Naive thymus-derived CD4-positive, alpha-beta T cell (primary cell): ENCODE measurements at regions of chr1 and their contacts with region 1.

Region 1: DNA sequence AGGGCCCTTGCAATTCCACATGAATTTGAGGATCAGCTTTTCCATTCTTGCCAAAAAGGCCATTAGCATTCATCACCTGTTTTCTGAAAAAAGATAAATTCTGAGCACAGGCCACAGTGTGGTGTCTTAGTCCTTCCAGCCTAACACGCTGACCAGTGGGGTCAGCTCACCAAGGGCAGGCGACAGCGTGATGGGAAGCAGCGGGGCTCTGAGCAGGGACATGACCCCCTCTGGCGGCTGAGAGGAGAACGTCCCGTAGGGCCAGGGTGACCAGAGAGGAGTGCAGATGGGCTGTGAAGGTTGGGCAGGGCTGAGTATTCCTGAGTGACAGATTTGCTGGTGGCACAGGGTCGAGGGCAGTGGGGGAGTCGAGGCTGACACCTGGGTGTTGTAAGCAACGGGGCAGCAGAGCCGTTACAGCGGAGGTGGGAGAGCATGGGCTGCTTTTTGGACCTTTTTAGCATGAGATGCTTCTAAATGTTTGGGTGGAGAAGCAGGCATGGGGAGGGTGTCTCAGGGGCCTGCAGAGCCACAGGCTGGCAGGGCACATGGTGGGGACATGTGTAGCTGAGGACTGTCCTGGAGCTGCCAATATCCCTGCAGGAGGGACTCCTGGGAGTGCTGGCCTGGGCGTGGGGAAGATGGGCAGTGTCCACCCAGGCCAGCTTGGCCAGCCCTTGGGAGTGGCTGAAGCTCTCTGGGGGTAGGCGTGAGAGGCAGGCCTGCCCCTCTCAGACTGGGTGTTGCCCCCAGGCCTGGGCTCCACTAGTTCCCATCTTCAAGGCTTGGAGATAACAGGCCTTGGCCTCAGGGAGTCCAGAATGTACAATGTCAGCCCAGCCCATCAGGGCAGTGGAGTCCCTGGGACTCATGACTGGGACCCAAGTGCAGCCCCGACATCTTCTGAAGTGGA is 8.6 kb upstream of the CALML6 start:
- DNase-seq: peak in 8 of 9 donors; percentile 49 to 77 (median 54)
- ATAC-seq: peak; percentile 40
- H3K4me3 ChIP-seq: no peak overlapping the region
- H3K4me3 Mint-ChIP-seq: peak overlapping the region; percentile 5 to 81 (median 58)
- H3K27ac ChIP-seq: no peak overlapping the region
- H3K27ac Mint-ChIP-seq: peak overlapping the region in 7 of 9 donors; percentile 2 to 72 (median 44)
- H3K4me1 ChIP-seq: peaks cover 5 to 10% of the 10 kb centered on the region in 2 donors
- H3K4me1 Mint-ChIP-seq: peaks cover 12 to 18% (median 15%) of the 10 kb centered on the region in 7 donors
- H3K27me3 ChIP-seq: no peaks in the 10 kb centered on the region
- H3K27me3 Mint-ChIP-seq: no peaks in the 10 kb centered on the region

Region 2: GRCh38 chr1:1307908-1308755 is 598.3 kb before region 1 on chr1 and contains the starts of genes ACAP3 and PUSL1:
- CTCF ChIA-PET with region 1: no interaction called
- POLR2A ChIA-PET with region 1: no interaction called
- intact Hi-C with region 1: loop called in 1 of 2 experiments (anchors 2 kb)
- DNase-seq: peak; percentile 88 to 94 (median 91)
- ATAC-seq: peak; percentile 87
- H3K4me3 ChIP-seq: peak within 1 kb of the TSS; percentile 83
- H3K4me3 Mint-ChIP-seq: peak within 1 kb of the TSS; percentile 82 to 94 (median 88)
- H3K27ac ChIP-seq: peak within 1 kb of the TSS; percentile 90
- H3K27ac Mint-ChIP-seq: peak within 1 kb of the TSS; percentile 47 to 94 (median 89)
- H3K4me1 ChIP-seq: peaks cover 31 to 34% of the 10 kb centered on the region in 2 donors
- H3K4me1 Mint-ChIP-seq: peaks cover 11 to 24% (median 17%) of the 10 kb centered on the region in 7 donors
- H3K27me3 ChIP-seq: no peaks in the 10 kb centered on the region
- H3K27me3 Mint-ChIP-seq: no peaks in the 10 kb centered on the region
- total RNA-seq, gene ACAP3: 51.5 to 70.8 (median 58.2) TPM
- total RNA-seq, gene PUSL1: 17.7 to 25.4 (median 19.4) TPM

Region 3: DNA sequence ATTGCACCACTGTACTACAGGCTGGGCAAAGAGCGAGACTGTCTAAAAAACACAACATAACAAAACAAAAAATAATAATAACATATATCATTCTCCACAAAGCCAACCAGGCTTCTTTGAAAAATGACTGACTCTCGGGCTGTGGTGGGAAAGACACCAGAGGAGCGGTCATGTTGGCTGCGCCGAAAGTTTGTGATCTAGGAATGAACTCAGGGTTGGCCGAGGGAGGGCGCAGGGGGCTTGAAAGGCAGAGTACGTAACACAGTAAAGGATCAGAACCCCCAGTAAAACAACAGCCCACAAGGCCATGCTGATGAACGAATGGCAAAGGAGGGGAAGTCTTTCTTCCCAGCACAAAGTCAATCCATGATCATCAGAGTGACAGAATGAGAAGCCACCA is 218.6 kb before region 1 on chr1:
- CTCF ChIA-PET with region 1: no interaction called
- POLR2A ChIA-PET with region 1: no interaction called
- intact Hi-C with region 1: loop called in 1 of 2 experiments (anchors 5 kb)
- DNase-seq: no peak
- ATAC-seq: no peak
- H3K4me3 ChIP-seq: no peak overlapping the region
- H3K4me3 Mint-ChIP-seq: peak overlapping the region in 5 of 10 donors; percentile 11 to 77 (median 39)
- H3K27ac ChIP-seq: peak overlapping the region; percentile 20
- H3K27ac Mint-ChIP-seq: peak overlapping the region in 4 of 9 donors; percentile 3 to 84 (median 62)
- H3K4me1 ChIP-seq: no peaks in the 10 kb centered on the region
- H3K4me1 Mint-ChIP-seq: peaks cover 2 to 64% (median 37%) of the 10 kb centered on the region in 7 donors
- H3K27me3 ChIP-seq: no peaks in the 10 kb centered on the region
- H3K27me3 Mint-ChIP-seq: no peaks in the 10 kb centered on the region

Region 4: DNA sequence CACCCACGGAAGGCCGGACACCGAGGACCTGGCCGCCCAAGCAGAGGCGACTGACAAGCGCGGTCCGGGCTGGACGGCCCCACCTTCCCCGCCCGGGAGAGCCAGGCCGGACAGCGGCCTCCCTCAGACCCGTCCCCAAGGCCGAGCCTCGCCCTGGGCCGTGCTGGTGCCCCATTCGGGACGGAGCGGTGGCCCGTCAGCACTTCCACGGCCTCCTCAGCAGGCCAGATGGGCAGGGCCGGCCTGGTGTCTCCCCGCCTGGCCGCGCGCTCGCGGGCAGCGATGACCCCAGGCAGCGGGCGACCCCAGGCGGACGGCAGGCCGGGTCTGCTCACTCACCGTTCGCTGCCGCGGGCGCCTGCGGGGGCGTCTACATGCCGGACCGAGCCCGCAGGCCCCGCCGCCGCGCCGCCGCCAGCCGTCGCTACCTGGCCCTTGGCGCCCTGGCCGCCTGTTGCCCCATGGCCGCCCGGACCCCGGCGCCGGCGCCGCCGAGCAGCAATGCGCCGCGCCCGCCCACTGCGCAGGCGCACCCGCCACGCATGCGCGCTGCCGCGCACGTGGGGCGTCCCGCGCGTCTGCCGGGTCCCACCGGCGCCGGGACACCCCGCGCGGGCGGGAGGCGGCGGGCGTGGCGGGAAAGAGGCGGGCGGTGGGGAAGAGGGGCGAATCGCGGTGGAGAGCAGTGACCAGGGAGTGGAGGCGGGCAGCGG is 128.3 kb before region 1 on chr1 and contains the start of gene NADK:
- CTCF ChIA-PET with region 1: interaction called, 8 read pairs
- POLR2A ChIA-PET with region 1: interaction called, 10 read pairs
- intact Hi-C with region 1: loop called (anchors 1 to 5 kb)
- DNase-seq: peak; percentile 59 to 92 (median 79)
- ATAC-seq: peak; percentile 62
- H3K4me3 ChIP-seq: peak within 1 kb of the TSS; percentile 74
- H3K4me3 Mint-ChIP-seq: peak within 1 kb of the TSS; percentile 84 to 95 (median 90)
- H3K27ac ChIP-seq: peak within 1 kb of the TSS; percentile 81
- H3K27ac Mint-ChIP-seq: peak within 1 kb of the TSS; percentile 94 to 97 (median 95)
- H3K4me1 ChIP-seq: peaks cover 47 to 61% of the 10 kb centered on the region in 2 donors
- H3K4me1 Mint-ChIP-seq: peaks cover 51 to 65% (median 59%) of the 10 kb centered on the region in 7 donors
- H3K27me3 ChIP-seq: no peaks in the 10 kb centered on the region
- H3K27me3 Mint-ChIP-seq: no peaks in the 10 kb centered on the region
- total RNA-seq, gene NADK: 45.2 to 115 (median 50.3) TPM

Region 5: GRCh38 chr1:1833916-1834325 is 72.5 kb before region 1 on chr1:
- CTCF ChIA-PET with region 1: no interaction called
- POLR2A ChIA-PET with region 1: no interaction called
- intact Hi-C with region 1: no loop called
- DNase-seq: no peak
- ATAC-seq: no peak
- H3K4me3 ChIP-seq: no peak overlapping the region
- H3K4me3 Mint-ChIP-seq: no peak overlapping the region
- H3K27ac ChIP-seq: no peak overlapping the region
- H3K27ac Mint-ChIP-seq: peak overlapping the region in 6 of 9 donors; percentile 35 to 78 (median 51)
- H3K4me1 ChIP-seq: no peaks in the 10 kb centered on the region
- H3K4me1 Mint-ChIP-seq: peaks cover 14 to 40% (median 32%) of the 10 kb centered on the region in 7 donors
- H3K27me3 ChIP-seq: no peaks in the 10 kb centered on the region
- H3K27me3 Mint-ChIP-seq: no peaks in the 10 kb centered on the region

Region 6: GRCh38 chr1:1890506-1891348 is 15.7 kb before region 1 on chr1 and contains the start of gene GNB1:
- CTCF ChIA-PET with region 1: interaction called, 5 read pairs
- POLR2A ChIA-PET with region 1: interaction called, 12 read pairs
- intact Hi-C with region 1: loop called (anchors 1 kb)
- DNase-seq: peak; percentile 80 to 96 (median 93)
- ATAC-seq: peak; percentile 88
- H3K4me3 ChIP-seq: peak within 1 kb of the TSS; percentile 64
- H3K4me3 Mint-ChIP-seq: peak within 1 kb of the TSS; percentile 83 to 100 (median 90)
- H3K27ac ChIP-seq: peak within 1 kb of the TSS; percentile 96
- H3K27ac Mint-ChIP-seq: peak within 1 kb of the TSS; percentile 89 to 98 (median 95)
- H3K4me1 ChIP-seq: peaks cover 36 to 52% of the 10 kb centered on the region in 2 donors
- H3K4me1 Mint-ChIP-seq: peaks cover 41 to 76% (median 61%) of the 10 kb centered on the region in 7 donors
- H3K27me3 ChIP-seq: no peaks in the 10 kb centered on the region
- H3K27me3 Mint-ChIP-seq: peaks cover 0 to under 1% (median 0%) of the 10 kb centered on the region in 5 donors
- total RNA-seq, gene GNB1: 170 to 358 (median 246) TPM

Region 7: GRCh38 chr1:1943834-1944570 is 37.6 kb after region 1 on chr1:
- CTCF ChIA-PET with region 1: no interaction called
- POLR2A ChIA-PET with region 1: no interaction called
- intact Hi-C with region 1: no loop called
- DNase-seq: peak in 8 of 9 donors; percentile 42 to 65 (median 49)
- ATAC-seq: peak; percentile 91
- H3K4me3 ChIP-seq: no peak overlapping the region
- H3K4me3 Mint-ChIP-seq: peak overlapping the region in 4 of 10 donors; percentile 6 to 65 (median 38)
- H3K27ac ChIP-seq: no peak overlapping the region
- H3K27ac Mint-ChIP-seq: no peak overlapping the region
- H3K4me1 ChIP-seq: peaks cover 3 to 6% of the 10 kb centered on the region in 2 donors
- H3K4me1 Mint-ChIP-seq: peaks cover 0 to 7% (median 3%) of the 10 kb centered on the region in 7 donors
- H3K27me3 ChIP-seq: no peaks in the 10 kb centered on the region
- H3K27me3 Mint-ChIP-seq: no peaks in the 10 kb centered on the region

Region 8: GRCh38 chr1:2133039-2133878 is 226.8 kb after region 1 on chr1:
- CTCF ChIA-PET with region 1: no interaction called
- POLR2A ChIA-PET with region 1: no interaction called
- intact Hi-C with region 1: loop called in 1 of 2 experiments (anchors 1 kb)
- DNase-seq: peak; percentile 93 to 97 (median 96)
- ATAC-seq: peak; percentile 94
- H3K4me3 ChIP-seq: peak overlapping the region; percentile 66
- H3K4me3 Mint-ChIP-seq: peak overlapping the region; percentile 73 to 88 (median 83)
- H3K27ac ChIP-seq: peak overlapping the region; percentile 80
- H3K27ac Mint-ChIP-seq: peak overlapping the region; percentile 54 to 96 (median 93)
- H3K4me1 ChIP-seq: peaks cover 10% of the 10 kb centered on the region in 2 donors
- H3K4me1 Mint-ChIP-seq: peaks cover 5 to 32% (median 17%) of the 10 kb centered on the region in 7 donors
- H3K27me3 ChIP-seq: no peaks in the 10 kb centered on the region
- H3K27me3 Mint-ChIP-seq: no peaks in the 10 kb centered on the region